ENCODE measurements at regions of chrX and their contacts with region 1.

Region 1: DNA sequence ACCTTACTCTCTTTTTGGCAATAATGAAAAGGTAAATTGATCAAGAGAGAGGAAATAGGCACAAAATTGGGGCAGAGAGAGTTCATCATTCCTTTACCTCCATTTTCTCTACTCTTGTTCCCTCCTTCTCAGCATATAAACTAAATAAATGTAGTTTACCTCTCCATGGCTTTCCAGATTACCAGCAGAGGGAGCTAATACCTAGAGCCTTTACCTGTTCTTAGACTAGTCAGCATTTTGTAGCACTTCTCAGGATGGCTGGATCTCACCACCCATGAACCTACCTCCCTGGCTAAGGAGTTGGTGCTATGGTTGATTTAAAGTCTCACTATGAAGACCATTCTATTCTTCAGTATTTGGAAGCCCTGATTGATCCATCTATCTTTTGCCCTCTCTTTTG is 15.7 kb downstream of the OFD1 start:
- DNase-seq: no peak
- ATAC-seq: peak in 1 of 2 donors; percentile 58
- H3K4me3 ChIP-seq: no peak overlapping the region
- H3K27ac ChIP-seq: no peak overlapping the region
- H3K4me1 ChIP-seq: no peaks in the 10 kb centered on the region
- H3K27me3 ChIP-seq: no peaks in the 10 kb centered on the region
- CTCF ChIP-seq: peak; percentile 12 to 54 (median 33)
- POLR2A ChIP-seq: no peak

Region 2: DNA sequence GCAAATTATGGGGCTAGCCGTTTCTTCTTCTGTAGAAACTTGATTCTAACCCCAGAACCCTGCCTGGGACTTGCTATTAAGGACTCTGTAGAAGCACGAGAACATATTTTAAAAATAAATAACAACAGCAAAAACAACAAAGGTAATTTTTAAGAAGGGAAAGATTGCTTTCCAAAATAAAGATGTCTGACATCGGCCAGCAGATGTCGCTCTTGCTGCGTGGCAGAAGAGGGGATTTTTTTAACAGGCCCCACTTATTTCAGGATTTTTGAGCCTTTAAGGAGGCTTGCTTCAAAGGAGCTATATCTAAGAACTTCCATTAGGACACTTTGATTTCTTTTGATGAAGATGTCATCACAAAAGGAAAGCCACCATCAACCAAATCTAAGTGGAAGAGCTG is 243.6 kb before region 1 on chrX:
- in situ Hi-C with region 1: no loop called
- intact Hi-C with region 1: loop called (anchors 5 kb)
- DNase-seq: no peak
- ATAC-seq: no peak
- H3K4me3 ChIP-seq: no peak overlapping the region
- H3K27ac ChIP-seq: no peak overlapping the region
- H3K4me1 ChIP-seq: no peaks in the 10 kb centered on the region
- H3K27me3 ChIP-seq: no peaks in the 10 kb centered on the region
- CTCF ChIP-seq: peak; percentile 38 to 78 (median 51)
- POLR2A ChIP-seq: no peak

Region 3: GRCh38 chrX:13581554-13581953 is 168.7 kb before region 1 on chrX:
- in situ Hi-C with region 1: no loop called
- intact Hi-C with region 1: no loop called
- DNase-seq: no peak
- ATAC-seq: no peak
- H3K4me3 ChIP-seq: no peak overlapping the region
- H3K27ac ChIP-seq: no peak overlapping the region
- H3K4me1 ChIP-seq: no peaks in the 10 kb centered on the region
- H3K27me3 ChIP-seq: no peaks in the 10 kb centered on the region
- CTCF ChIP-seq: no peak
- POLR2A ChIP-seq: no peak

Region 4: DNA sequence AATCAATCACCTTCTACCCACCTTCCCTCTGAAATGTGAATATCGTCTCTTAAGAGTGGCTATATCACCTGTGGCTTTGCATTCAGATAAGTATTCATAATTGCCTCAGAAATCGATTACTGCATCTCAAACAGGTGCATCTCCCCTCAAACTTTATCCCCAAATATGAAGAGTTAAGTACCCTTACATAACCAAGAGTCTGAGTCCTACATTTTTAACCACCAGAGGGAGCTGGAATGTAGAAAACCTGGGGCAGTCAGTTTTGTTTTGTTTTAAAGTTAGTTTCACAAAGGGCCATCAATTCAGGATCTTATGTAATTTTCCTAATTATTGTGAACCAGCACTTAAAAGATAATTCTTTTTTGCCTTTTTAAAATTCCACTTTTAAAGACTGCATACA is 91.6 kb before region 1 on chrX:
- in situ Hi-C with region 1: loop called in 2 of 4 experiments (anchors 5 to 10 kb)
- intact Hi-C with region 1: loop called (anchors 2 kb)
- DNase-seq: no peak
- ATAC-seq: peak; percentile 45 to 61
- H3K4me3 ChIP-seq: no peak overlapping the region
- H3K27ac ChIP-seq: peak overlapping the region in 3 of 4 donors; percentile 15 to 57 (median 42)
- H3K4me1 ChIP-seq: peaks cover 12% of the 10 kb centered on the region in 2 donors
- H3K27me3 ChIP-seq: no peaks in the 10 kb centered on the region
- CTCF ChIP-seq: peak; percentile 48 to 66 (median 60)
- POLR2A ChIP-seq: no peak

Region 5: GRCh38 chrX:13721819-13722519 is 28.2 kb before region 1 on chrX:
- in situ Hi-C with region 1: no loop called
- intact Hi-C with region 1: no loop called
- DNase-seq: no peak
- ATAC-seq: peak; percentile 69 to 85
- H3K4me3 ChIP-seq: no peak overlapping the region
- H3K27ac ChIP-seq: peak overlapping the region; percentile 64 to 74 (median 72)
- H3K4me1 ChIP-seq: peaks cover 9 to 13% of the 10 kb centered on the region in 2 donors
- H3K27me3 ChIP-seq: no peaks in the 10 kb centered on the region
- CTCF ChIP-seq: no peak
- POLR2A ChIP-seq: no peak

Region 6: DNA sequence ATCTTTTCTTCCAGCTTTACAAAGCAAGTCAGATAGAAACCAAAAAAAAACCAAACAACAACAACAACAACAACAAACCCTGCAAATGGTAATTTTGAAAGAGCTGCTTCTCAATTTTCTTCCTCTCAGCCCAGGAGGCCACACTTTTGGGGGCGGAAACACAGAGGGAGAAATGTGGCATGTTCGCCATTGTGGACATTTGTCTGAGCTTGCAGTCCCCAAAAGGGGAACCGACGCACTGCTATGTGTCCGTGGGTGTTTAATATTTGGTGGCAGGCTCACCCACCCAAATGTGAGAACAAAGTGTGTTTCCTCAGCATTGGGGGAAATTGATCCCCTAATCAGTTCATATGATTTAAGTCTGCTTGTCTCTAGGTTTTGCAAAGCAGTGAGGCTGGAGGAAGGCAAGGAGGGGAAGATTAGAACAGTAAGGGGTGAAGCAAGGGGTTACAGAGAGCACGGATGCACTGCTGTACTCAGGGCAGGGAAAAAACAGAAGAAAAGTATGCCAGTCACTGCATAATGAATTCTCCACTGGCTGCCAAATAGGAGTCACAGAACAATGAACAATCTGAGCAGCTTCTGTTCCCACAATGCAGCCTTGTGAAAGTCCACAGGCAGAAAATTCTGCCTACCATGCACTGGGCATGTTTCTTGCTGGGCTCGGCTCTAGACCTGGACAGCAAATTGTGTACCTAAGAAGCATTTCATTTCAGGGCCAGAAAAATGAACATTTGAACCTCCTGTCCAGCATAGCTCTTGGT is 141.4 kb after region 1 on chrX:
- in situ Hi-C with region 1: no loop called
- intact Hi-C with region 1: no loop called
- DNase-seq: no peak
- ATAC-seq: no peak
- H3K4me3 ChIP-seq: no peak overlapping the region
- H3K27ac ChIP-seq: no peak overlapping the region
- H3K4me1 ChIP-seq: no peaks in the 10 kb centered on the region
- H3K27me3 ChIP-seq: peaks cover 0 to 5% (median 0%) of the 10 kb centered on the region in 3 donors
- CTCF ChIP-seq: no peak
- POLR2A ChIP-seq: no peak

Measured in gastrocnemius medialis (tissue), 4 donors.